Activated T-helper 2 cell treated with anti-CD3 and anti-CD28 coated beads, Interferon-gamma antibody, Interleukin-2, Interleukin-4, amounts not matched to agents 10 μg/mL and 5 μg/mL and 100 μg/mL, durations not matched to agents 14 hours and 24 hours and 36 hours (primary cell): ENCODE measurements at regions of chr11 and their contacts with region 1.

Region 1: GRCh38 chr11:86244522-86245368 is at the start of gene EED:
- DNase-seq: peak; percentile 92
- H3K4me3 Mint-ChIP-seq: no peak within 1 kb of the TSS
- H3K27ac Mint-ChIP-seq: no peak within 1 kb of the TSS
- H3K4me1 Mint-ChIP-seq: peaks cover 38% of the 10 kb centered on the region
- H3K27me3 Mint-ChIP-seq: no peaks in the 10 kb centered on the region
- total RNA-seq, gene EED: 174 and 182 TPM in 2 replicates

Region 2: GRCh38 chr11:85664615-85665481 is 579.9 kb before region 1 on chr11 and contains the start of gene CREBZF:
- intact Hi-C with region 1: loop called (anchors 2 kb)
- DNase-seq: peak; percentile 94
- H3K4me3 Mint-ChIP-seq: peak within 1 kb of the TSS; percentile 99
- H3K27ac Mint-ChIP-seq: peak within 1 kb of the TSS; percentile 96
- H3K4me1 Mint-ChIP-seq: peaks cover 33% of the 10 kb centered on the region
- H3K27me3 Mint-ChIP-seq: no peaks in the 10 kb centered on the region
- total RNA-seq, gene CREBZF: 47.8 and 49.7 TPM in 2 replicates

Region 3: GRCh38 chr11:85947431-85948272 is 297.1 kb before region 1 on chr11:
- intact Hi-C with region 1: loop called (anchors 5 kb)
- DNase-seq: no peak
- H3K4me3 Mint-ChIP-seq: peak overlapping the region; percentile 15
- H3K27ac Mint-ChIP-seq: peak overlapping the region; percentile 75
- H3K4me1 Mint-ChIP-seq: peaks cover 35% of the 10 kb centered on the region
- H3K27me3 Mint-ChIP-seq: no peaks in the 10 kb centered on the region

Region 4: DNA sequence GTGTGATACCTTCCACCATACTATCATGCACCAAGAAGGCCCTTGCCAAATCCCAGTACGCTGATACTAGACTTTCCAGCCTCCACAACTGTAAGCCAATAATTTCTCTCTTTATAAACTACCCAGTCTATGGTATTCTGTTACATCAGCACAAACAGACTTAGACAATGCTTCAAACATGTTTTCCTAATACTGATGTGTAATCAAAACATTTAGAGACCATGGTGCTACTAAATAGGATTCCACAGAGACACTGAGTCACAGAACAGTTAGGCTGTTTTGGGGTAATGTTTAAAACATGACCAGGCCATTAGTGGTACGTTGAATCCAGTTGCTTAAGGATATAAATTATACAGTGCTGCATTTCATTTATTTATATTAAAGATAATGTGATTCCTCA is 279.5 kb before region 1 on chr11:
- intact Hi-C with region 1: no loop called
- DNase-seq: no peak
- H3K4me3 Mint-ChIP-seq: no peak overlapping the region
- H3K27ac Mint-ChIP-seq: no peak overlapping the region
- H3K4me1 Mint-ChIP-seq: peaks cover 29% of the 10 kb centered on the region
- H3K27me3 Mint-ChIP-seq: no peaks in the 10 kb centered on the region

Region 5: GRCh38 chr11:86068951-86069407 is 175.8 kb before region 1 on chr11 and contains the start of gene PICALM:
- intact Hi-C with region 1: loop called (anchors 1 kb)
- DNase-seq: peak; percentile 97
- H3K4me3 Mint-ChIP-seq: peak within 1 kb of the TSS; percentile 95
- H3K27ac Mint-ChIP-seq: peak within 1 kb of the TSS; percentile 88
- H3K4me1 Mint-ChIP-seq: peaks cover 30% of the 10 kb centered on the region
- H3K27me3 Mint-ChIP-seq: peaks cover 2% of the 10 kb centered on the region
- total RNA-seq, gene PICALM: 193 and 213 TPM in 2 replicates

Region 6: GRCh38 chr11:86202013-86202336 is 42.8 kb before region 1 on chr11:
- intact Hi-C with region 1: loop called (anchors 1 kb)
- DNase-seq: no peak
- H3K4me3 Mint-ChIP-seq: no peak overlapping the region
- H3K27ac Mint-ChIP-seq: no peak overlapping the region
- H3K4me1 Mint-ChIP-seq: peaks cover 15% of the 10 kb centered on the region
- H3K27me3 Mint-ChIP-seq: no peaks in the 10 kb centered on the region

Region 7: DNA sequence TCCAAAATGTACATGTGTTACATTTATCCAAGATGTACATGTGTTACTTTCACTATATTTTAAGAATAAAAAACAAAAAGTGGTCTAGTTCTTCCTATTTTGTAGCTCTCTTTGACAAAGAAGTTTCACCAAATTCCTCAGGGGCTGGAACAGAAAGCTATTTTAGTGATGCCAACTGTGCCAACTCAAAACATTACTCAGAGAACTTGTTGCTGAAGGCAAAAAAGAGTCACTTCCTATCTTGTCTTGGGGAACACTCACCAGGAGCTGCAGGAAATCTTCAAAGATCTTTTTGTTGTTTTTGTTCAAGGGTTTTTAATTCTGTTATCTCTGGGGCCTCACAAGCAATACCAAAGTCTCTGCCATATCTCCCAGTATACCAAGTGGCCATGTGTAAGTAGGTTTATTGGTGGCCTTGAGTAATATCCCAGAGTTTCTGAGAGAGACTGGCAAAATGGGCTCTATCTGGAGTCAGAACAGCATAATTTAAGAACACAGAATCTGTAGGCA is 13.8 kb before region 1 on chr11:
- intact Hi-C with region 1: loop called (anchors 1 kb)
- DNase-seq: no peak
- H3K4me3 Mint-ChIP-seq: no peak overlapping the region
- H3K27ac Mint-ChIP-seq: peak overlapping the region; percentile 38
- H3K4me1 Mint-ChIP-seq: peaks cover 54% of the 10 kb centered on the region
- H3K27me3 Mint-ChIP-seq: peaks cover 3% of the 10 kb centered on the region